ENCODE measurements at regions of chr11 and their contacts with region 1.

Region 1: DNA sequence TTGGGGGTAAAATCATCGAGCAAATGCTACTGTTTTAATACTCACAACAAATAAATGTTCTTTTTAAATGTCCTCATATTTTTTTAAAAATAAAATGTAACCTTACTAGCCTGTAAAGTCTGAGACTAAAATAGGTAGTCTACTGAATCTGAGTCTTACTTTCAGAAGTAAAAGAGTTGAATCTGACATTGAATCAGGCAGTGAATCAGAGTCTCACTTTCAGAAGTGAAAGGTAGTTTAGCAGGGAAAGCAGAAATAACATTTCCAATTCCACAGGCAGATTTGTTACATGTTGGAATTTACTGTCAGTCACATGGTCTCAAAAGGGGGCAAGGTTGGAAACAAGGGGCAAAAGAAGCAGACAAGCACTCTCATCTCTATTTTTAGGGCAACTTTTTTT is 143.0 kb downstream of the ELP4 start:
- DNase-seq: no peak
- H3K4me3 ChIP-seq: no peak overlapping the region
- H3K27ac ChIP-seq: no peak overlapping the region
- H3K4me1 ChIP-seq: no peaks in the 10 kb centered on the region
- H3K27me3 ChIP-seq: no peaks in the 10 kb centered on the region
- CTCF ChIP-seq: no peak

Region 2: GRCh38 chr11:31740131-31740530 is 87.6 kb after region 1 on chr11:
- CTCF ChIA-PET with region 1: no interaction called
- POLR2A ChIA-PET with region 1: no interaction called
- intact Hi-C with region 1: no loop called
- DNase-seq: no peak
- H3K4me3 ChIP-seq: no peak overlapping the region
- H3K27ac ChIP-seq: no peak overlapping the region
- H3K4me1 ChIP-seq: no peaks in the 10 kb centered on the region
- H3K27me3 ChIP-seq: no peaks in the 10 kb centered on the region
- CTCF ChIP-seq: no peak

Region 3: GRCh38 chr11:31757260-31757835 is 104.8 kb after region 1 on chr11:
- CTCF ChIA-PET with region 1: no interaction called
- POLR2A ChIA-PET with region 1: interaction called, 13 read pairs
- intact Hi-C with region 1: no loop called
- DNase-seq: no peak
- H3K4me3 ChIP-seq: no peak overlapping the region
- H3K27ac ChIP-seq: no peak overlapping the region
- H3K4me1 ChIP-seq: no peaks in the 10 kb centered on the region
- H3K27me3 ChIP-seq: no peaks in the 10 kb centered on the region
- CTCF ChIP-seq: no peak

Measured in A673 (cell line).